ENCODE measurements at regions of chr12 and their contacts with region 1.

Region 1: DNA sequence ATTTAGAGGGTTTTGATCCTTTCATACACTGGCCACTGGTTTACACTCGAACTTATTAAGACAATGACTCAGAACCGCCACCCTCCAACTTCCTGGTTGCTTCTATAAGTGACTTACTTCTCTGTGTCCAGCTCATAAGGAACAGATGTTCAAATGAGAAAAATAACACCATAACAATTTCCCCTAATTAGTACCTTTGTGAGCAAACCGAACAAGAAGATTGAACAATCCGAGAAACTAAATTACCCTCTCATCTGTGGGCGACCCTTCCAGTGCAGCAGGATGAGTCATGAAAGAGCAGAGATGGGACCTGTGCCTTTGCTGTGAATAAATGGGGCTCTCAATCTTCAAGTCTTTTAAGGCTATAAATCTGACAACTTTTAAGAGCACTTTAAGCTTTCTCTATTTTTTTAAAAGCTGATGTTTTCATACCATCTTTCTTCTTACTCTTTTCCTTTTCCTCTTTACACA is 146.8 kb upstream of the RASSF8 start:
- DNase-seq: peak; percentile 69
- ATAC-seq: peak; percentile 59
- H3K4me3 ChIP-seq: peak overlapping the region; percentile 19
- H3K27ac ChIP-seq: peak overlapping the region; percentile 85
- H3K4me1 ChIP-seq: peaks cover 43% of the 10 kb centered on the region
- H3K27me3 ChIP-seq: no peaks in the 10 kb centered on the region
- CTCF ChIP-seq: no peak

Region 2: GRCh38 chr12:25677232-25677937 is 134.3 kb before region 1 on chr12:
- CTCF ChIA-PET with region 1: no interaction called
- POLR2A ChIA-PET with region 1: no interaction called
- intact Hi-C with region 1: loop called (anchors 5 kb)
- DNase-seq: peak; percentile 46
- ATAC-seq: peak; percentile 74
- H3K4me3 ChIP-seq: no peak overlapping the region
- H3K27ac ChIP-seq: no peak overlapping the region
- H3K4me1 ChIP-seq: peaks cover 5% of the 10 kb centered on the region; the same call in 1 of the 2 replicates
- H3K27me3 ChIP-seq: no peaks in the 10 kb centered on the region
- CTCF ChIP-seq: peak; percentile 52

Region 3: DNA sequence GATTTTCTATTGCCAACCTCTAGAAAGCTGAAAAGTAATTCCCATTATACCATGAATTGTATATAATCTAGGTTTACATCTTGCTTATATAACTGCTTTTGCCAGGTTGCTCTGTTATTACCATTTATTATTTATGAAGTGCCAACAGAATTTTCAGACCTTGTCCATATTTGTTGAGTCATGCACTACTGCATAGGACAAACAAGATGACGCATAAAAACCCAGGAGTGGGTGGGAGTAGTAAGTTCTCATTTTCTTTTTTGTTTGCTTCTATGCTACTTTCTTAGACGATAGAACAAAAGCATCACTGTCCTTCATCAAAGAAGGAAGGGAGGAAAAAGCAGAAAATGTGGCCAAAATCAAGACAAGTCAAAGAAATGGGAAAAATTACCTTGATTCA is 27.8 kb after region 1 on chr12:
- CTCF ChIA-PET with region 1: no interaction called
- POLR2A ChIA-PET with region 1: no interaction called
- intact Hi-C with region 1: loop called (anchors 1 kb)
- DNase-seq: peak; percentile 98
- ATAC-seq: peak; percentile 98
- H3K4me3 ChIP-seq: peak overlapping the region; percentile 1; the same call in 1 of the 2 replicates
- H3K27ac ChIP-seq: peak overlapping the region; percentile 81
- H3K4me1 ChIP-seq: peaks cover 23% of the 10 kb centered on the region
- H3K27me3 ChIP-seq: no peaks in the 10 kb centered on the region
- CTCF ChIP-seq: no peak

Region 4: GRCh38 chr12:25924491-25925463 is 113.1 kb after region 1 on chr12:
- CTCF ChIA-PET with region 1: no interaction called
- POLR2A ChIA-PET with region 1: no interaction called
- intact Hi-C with region 1: loop called (anchors 2 kb)
- DNase-seq: peak; percentile 100
- ATAC-seq: peak; percentile 83
- H3K4me3 ChIP-seq: peak overlapping the region; percentile 18; the same call in 1 of the 2 replicates
- H3K27ac ChIP-seq: peak overlapping the region; percentile 92
- H3K4me1 ChIP-seq: peaks cover 72% of the 10 kb centered on the region
- H3K27me3 ChIP-seq: no peaks in the 10 kb centered on the region
- CTCF ChIP-seq: 0 out of 2 replicates have a peak, but pooled peaks have one; percentile 27

Measured in PC-3 (cell line).